Dorsolateral prefrontal cortex (tissue), 120 donors: ENCODE measurements at regions of chrX and their contacts with region 1.

Region 1: DNA sequence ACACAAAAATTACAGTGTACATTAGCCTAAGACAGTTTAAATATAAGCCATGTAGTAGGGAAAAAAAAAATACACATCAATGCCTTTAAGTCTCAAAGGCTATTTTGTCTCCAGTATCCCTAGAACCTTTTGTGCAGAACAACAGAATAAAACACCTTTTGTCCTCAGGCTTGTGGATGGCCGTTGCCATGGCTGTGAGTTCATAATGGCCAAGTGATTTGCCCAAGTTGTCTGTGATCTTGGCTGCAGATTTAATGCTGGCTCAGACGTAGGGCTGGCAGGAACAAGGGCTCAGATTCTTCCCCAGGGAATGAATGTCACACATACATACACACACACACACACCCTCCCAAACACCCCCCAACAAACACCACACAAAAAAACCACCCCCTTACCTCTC is 25.3 kb downstream of the GPM6B start:
- DNase-seq: peak in 7 of 10 donors; percentile 27 to 74 (median 56)
- H3K4me3 ChIP-seq: peak overlapping the region in 5 of 59 donors; percentile 5 to 26 (median 17)
- H3K27ac ChIP-seq: peak overlapping the region in 57 of 59 donors; percentile 18 to 93 (median 81)
- H3K27me3 ChIP-seq: peaks cover 0 to 46% (median 4%) of the 10 kb centered on the region in 45 donors
- CTCF ChIP-seq: no peak

Region 2: DNA sequence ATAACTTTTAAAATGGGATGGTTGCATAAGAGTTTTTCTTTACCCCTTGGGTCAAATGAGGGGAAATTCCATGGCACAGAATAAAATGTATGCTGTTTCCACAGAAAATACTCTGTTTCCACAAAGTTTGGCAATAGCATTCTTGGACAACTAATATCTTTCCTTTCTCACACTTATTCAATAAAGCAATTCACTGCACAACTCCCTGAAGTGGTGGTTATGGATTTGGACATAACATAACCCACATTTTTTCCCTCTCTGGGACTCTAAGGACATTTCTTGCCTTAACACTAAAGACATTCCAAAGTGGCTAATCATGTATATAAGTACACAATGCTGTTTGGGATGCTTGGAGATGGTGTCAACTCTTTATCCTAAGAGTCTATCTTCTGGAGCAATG is 77.0 kb after region 1 on chrX:
- intact Hi-C with region 1: loop called in 1 of 2 experiments (anchors 10 kb)
- DNase-seq: no peak
- H3K4me3 ChIP-seq: no peak overlapping the region
- H3K27ac ChIP-seq: peak overlapping the region in 33 of 59 donors; percentile 1 to 71 (median 30)
- H3K27me3 ChIP-seq: peaks cover 0 to 67% (median 10%) of the 10 kb centered on the region in 45 donors
- CTCF ChIP-seq: no peak